OCI-LY7 (cell line): ENCODE measurements at regions of chr15 and their contacts with region 1.

Region 1: GRCh38 chr15:76866716-76867321 is 38.3 kb downstream of the SCAPER start:
- DNase-seq: peak; percentile 25
- H3K4me3 ChIP-seq: no peak overlapping the region
- H3K27ac ChIP-seq: no peak overlapping the region
- H3K4me1 ChIP-seq: no peaks in the 10 kb centered on the region
- CTCF ChIP-seq: peak; percentile 79

Region 2: GRCh38 chr15:76190834-76191538 is 675.8 kb before region 1 on chr15:
- CTCF ChIA-PET with region 1: no interaction called
- POLR2A ChIA-PET with region 1: no interaction called
- intact Hi-C with region 1: loop called (anchors 2 kb)
- DNase-seq: peak; percentile 78
- H3K4me3 ChIP-seq: no peak overlapping the region
- H3K27ac ChIP-seq: no peak overlapping the region
- H3K4me1 ChIP-seq: peaks cover 3% of the 10 kb centered on the region
- CTCF ChIP-seq: peak; percentile 91

Region 3: GRCh38 chr15:76823890-76824289 is 42.9 kb before region 1 on chr15:
- CTCF ChIA-PET with region 1: no interaction called
- POLR2A ChIA-PET with region 1: no interaction called
- intact Hi-C with region 1: no loop called
- DNase-seq: no peak
- H3K4me3 ChIP-seq: no peak overlapping the region
- H3K27ac ChIP-seq: no peak overlapping the region
- H3K4me1 ChIP-seq: no peaks in the 10 kb centered on the region
- CTCF ChIP-seq: no peak

Region 4: DNA sequence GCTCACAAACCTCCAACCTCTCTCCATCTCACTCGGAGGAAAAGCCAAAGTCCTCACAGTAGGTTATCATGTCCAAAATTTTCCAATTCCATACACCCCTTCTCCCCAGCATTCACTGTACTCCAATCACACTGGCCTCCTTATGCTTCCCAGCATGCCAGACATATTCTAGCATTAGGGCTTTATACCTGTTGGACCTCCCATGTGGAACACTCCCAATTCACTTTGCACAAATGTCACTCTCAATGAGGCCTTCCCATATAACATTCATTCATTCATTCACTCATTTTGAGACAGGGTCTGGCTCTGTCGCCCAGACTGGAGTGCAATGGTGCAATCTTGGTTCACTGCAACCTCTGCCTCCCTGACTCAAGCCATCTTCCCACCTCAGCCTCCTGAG is 18.4 kb after region 1 on chr15:
- CTCF ChIA-PET with region 1: no interaction called
- POLR2A ChIA-PET with region 1: no interaction called
- intact Hi-C with region 1: no loop called
- DNase-seq: no peak
- H3K4me3 ChIP-seq: no peak overlapping the region
- H3K27ac ChIP-seq: no peak overlapping the region
- H3K4me1 ChIP-seq: no peaks in the 10 kb centered on the region
- CTCF ChIP-seq: no peak

Region 5: DNA sequence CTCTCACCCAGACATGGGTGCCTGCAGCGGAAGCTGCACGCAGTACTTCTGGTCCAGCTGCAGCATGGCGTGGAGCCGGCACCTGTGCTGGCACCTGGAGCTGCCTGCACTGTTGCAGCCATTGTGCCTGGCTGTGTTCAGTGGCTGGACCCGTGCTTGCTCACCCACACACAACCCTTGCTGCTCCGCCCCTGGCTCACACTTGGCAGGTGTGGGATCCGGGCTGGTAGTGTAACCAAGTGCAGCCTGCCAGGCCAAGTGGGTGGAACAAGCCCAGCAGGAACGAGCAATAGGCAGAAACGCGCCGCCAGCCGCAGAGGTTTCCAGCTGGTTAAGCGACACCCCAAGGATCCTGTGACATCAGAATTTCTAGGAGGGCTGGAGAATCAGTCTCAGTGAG is 49.5 kb after region 1 on chr15:
- CTCF ChIA-PET with region 1: no interaction called
- POLR2A ChIA-PET with region 1: no interaction called
- intact Hi-C with region 1: no loop called
- DNase-seq: no peak
- H3K4me3 ChIP-seq: no peak overlapping the region
- H3K27ac ChIP-seq: no peak overlapping the region
- H3K4me1 ChIP-seq: no peaks in the 10 kb centered on the region
- CTCF ChIP-seq: no peak

Region 6: GRCh38 chr15:76935620-76936019 is 68.8 kb after region 1 on chr15:
- CTCF ChIA-PET with region 1: no interaction called
- POLR2A ChIA-PET with region 1: no interaction called
- intact Hi-C with region 1: no loop called
- DNase-seq: peak; percentile 78
- H3K4me3 ChIP-seq: peak overlapping the region; percentile 4
- H3K27ac ChIP-seq: peak overlapping the region; percentile 17
- H3K4me1 ChIP-seq: peaks cover 38% of the 10 kb centered on the region
- CTCF ChIP-seq: no peak